ENCODE measurements at regions of chr16 and their contacts with region 1.

Region 1: DNA sequence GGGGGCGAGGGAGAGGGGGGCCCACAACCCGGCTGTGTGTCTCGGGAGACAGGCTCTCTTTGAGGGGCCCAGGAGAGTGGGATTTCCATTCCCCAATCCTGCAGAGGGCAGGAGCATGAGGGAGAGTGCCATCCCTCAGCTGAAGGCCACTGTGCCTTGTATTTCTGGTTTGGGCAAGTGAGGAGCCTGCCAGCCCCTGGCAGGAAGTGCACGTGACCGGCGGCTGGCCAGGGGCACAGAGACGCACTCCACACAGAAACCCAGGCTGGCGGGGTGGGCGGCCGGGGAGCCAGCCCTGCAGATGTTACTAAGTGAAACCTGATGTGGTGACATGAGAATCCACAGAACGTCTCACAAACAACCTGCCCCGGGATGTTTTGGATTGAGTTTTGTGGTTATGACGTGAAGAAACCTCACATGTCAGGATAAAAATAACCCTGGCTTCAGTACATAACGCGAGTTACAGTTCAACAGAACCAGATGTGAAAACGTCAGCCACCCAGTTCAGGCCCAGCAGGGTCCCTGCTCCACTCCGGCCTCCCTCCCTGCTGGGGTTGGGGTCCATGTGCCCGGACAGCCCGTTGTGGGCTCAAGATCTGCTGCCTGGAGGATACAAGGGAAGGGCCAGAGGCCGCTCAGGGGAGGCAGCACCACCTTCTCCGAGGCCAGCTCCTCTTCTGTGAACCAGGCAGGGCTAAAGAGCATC is 51.7 kb upstream of the MTSS2 start:
- DNase-seq: peak; percentile 77
- H3K4me3 ChIP-seq: no peak overlapping the region
- H3K27ac ChIP-seq: peak overlapping the region; percentile 86 to 93 (median 87)
- H3K4me1 ChIP-seq: peaks cover 19 to 47% (median 23%) of the 10 kb centered on the region in 4 donors
- H3K27me3 ChIP-seq: no peaks in the 10 kb centered on the region
- CTCF ChIP-seq: no peak
- EP300 ChIP-seq: peak; percentile 60
- POLR2A ChIP-seq: peak; percentile 34

Region 2: DNA sequence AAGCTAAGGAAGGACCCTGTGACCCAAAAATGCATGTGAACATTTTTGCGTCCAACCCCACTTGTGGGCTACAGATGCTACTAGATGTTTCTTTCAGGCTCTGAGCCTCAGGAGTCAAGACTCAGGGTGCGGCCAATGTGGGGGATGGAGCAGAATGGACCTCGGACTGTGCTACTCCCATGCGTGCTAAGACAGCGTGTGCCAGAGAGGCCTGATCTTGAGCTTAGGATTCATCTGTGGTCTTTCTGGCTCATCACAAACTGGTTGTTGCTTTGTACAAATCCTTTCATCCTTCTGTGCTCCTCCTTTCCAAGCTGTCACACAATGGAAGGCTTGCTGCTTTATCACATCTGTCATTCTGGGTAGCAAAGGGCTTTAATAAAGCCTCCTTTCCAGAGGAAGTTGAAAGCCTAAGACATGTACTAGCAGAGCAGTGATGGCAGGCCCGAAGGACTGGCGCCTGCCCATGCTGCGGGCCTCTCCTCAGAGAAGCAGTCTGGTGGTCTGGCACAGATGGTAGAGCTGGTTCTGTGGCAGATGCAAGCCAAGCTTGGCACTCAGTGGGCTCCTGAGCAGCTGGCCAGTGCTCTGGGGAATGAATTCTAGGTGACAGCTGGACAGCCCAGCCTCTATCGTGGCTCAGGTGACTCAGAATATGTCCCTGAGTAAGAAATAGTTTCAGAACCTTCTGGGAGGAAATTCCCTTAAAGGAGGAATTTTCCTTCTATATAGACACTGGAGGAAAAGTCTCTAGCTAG is 241.9 kb before region 1 on chr16:
- in situ Hi-C with region 1: no loop called
- intact Hi-C with region 1: no loop called
- DNase-seq: no peak
- H3K4me3 ChIP-seq: no peak overlapping the region
- H3K27ac ChIP-seq: no peak overlapping the region
- H3K4me1 ChIP-seq: no peaks in the 10 kb centered on the region
- H3K27me3 ChIP-seq: no peaks in the 10 kb centered on the region
- CTCF ChIP-seq: no peak
- EP300 ChIP-seq: no peak
- POLR2A ChIP-seq: no peak

Region 3: DNA sequence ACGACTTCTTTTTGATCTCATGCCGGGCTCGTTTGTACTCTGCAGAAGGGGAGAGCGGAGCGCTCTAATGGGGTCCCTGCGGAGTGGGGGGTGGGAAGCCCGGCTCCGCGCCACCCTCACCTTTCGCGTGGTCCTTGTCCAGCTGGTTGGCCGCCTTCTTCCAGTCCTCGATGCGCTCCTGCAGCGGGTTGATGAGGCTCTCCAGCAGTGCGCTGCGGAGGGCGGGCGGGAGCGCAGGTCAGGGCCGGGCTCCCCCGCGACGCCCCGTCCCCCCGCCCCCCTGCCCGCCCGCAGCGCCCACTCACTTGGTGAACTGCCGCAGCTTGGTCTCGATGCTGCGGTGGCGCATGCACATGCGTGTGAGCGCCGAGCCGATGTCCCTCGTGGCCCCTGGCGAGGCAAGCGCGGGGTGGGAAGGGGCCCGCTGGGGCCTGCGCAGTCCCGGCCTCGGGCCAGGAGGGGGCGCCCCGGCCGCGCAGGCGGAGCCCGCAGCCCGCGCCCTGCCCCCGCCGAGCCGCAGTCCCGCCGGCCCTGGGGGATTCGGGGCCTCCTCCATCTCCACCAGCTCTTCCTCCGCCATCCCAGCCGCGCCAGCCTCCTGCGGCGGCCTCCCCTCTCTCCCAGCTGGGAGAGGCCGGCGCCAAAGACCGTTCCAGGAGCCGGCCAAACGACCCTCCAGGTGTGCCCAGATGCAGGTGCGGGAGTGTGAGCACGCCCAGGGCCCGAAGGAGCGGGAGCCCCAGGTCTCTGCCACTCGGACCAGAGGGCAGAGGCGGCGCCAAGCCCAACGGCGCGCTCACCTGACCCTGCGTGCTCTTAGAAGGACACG is 57.6 kb before region 1 on chr16:
- in situ Hi-C with region 1: no loop called
- intact Hi-C with region 1: loop called (anchors 1 kb)
- DNase-seq: no peak
- H3K4me3 ChIP-seq: no peak overlapping the region
- H3K27ac ChIP-seq: peak overlapping the region; percentile 80 to 91 (median 89)
- H3K4me1 ChIP-seq: peaks cover 33 to 49% (median 40%) of the 10 kb centered on the region in 4 donors
- H3K27me3 ChIP-seq: no peaks in the 10 kb centered on the region
- CTCF ChIP-seq: peak in 4 of 5 experiments; percentile 8 to 64 (median 51)
- EP300 ChIP-seq: no peak
- POLR2A ChIP-seq: no peak

Region 4: DNA sequence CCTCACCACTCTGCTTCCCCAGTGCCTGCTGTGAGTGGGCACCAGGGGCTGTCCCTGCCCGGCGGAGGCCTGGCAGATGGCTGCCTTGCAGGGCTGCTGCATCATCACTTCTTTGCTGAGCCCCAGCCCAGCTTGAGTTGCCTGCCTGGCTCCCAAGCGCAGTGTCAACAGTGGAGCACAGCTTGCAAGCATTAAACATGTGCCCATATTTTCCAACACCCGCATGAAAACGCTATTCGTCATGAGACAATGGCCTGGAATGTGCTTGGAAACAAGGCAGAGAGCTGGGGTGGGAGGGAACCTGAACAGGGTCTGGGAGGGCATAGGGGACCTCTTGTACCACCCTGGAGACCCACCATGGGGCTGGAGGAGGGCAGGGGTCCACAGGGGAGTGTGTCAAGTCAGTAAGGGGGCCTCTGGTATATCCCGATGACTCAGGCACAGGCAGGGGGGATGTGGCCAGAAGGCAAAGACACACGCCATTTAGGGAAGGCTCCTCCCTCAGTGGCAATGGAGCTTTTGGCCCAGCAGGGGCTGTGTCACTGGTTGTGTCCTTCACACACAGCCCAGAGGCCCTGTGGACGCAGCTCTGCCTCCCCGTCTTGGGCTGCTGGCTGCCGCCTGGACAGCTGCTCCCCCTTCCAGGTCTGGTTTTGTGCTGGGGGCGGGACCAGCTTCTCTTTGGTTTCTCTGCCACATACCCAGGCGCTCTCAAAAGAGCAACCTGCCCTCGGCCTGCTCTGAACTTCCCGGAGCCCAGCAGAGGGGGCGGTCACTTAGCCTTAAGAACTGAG is 34.3 kb before region 1 on chr16:
- in situ Hi-C with region 1: no loop called
- intact Hi-C with region 1: loop called (anchors 5 kb)
- DNase-seq: peak; percentile 47
- H3K4me3 ChIP-seq: no peak overlapping the region
- H3K27ac ChIP-seq: peak overlapping the region; percentile 79 to 87 (median 86)
- H3K4me1 ChIP-seq: peaks cover 18 to 76% (median 51%) of the 10 kb centered on the region in 4 donors
- H3K27me3 ChIP-seq: no peaks in the 10 kb centered on the region
- CTCF ChIP-seq: peak in 4 of 5 experiments; percentile 22 to 45 (median 32)
- EP300 ChIP-seq: no peak
- POLR2A ChIP-seq: no peak

Region 5: DNA sequence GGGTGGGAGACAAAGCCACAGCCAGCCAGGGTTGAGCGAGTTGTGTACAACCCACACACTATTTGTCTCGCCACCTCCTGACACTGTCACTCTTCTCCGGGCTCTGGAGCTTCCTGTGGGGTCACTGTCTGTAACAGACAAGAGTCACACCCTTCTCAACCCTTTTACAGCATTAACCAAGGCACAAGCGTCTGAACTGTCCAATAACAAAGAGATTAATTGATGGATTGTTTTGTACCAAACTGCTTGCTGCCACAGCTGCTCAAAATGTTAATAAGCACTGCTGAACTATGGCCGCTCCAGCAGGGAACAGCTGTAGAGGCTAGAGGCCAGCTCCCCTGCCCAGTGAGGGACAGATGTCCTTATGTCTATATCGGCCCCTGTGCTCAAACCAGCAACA is 518.2 kb after region 1 on chr16:
- in situ Hi-C with region 1: no loop called
- intact Hi-C with region 1: no loop called
- DNase-seq: no peak
- H3K4me3 ChIP-seq: no peak overlapping the region
- H3K27ac ChIP-seq: no peak overlapping the region
- H3K4me1 ChIP-seq: no peaks in the 10 kb centered on the region
- H3K27me3 ChIP-seq: no peaks in the 10 kb centered on the region
- CTCF ChIP-seq: no peak
- EP300 ChIP-seq: no peak
- POLR2A ChIP-seq: no peak